ENCODE measurements at regions of chr22 and their contacts with region 1.

Region 1: GRCh38 chr22:30920407-30920806 is 48.2 kb downstream of the MORC2 start:
- DNase-seq: peak; percentile 92
- H3K4me3 ChIP-seq: peak overlapping the region in 2 of 8 donors; percentile 48 to 60
- H3K27ac ChIP-seq: no peak overlapping the region
- H3K4me1 ChIP-seq: peaks cover 3 to 29% (median 21%) of the 10 kb centered on the region in 6 donors
- H3K27me3 ChIP-seq: no peaks in the 10 kb centered on the region
- CTCF ChIP-seq: peak; percentile 74 to 96 (median 91)
- POLR2A ChIP-seq: no peak

Region 2: GRCh38 chr22:30634471-30635233 is 285.8 kb before region 1 on chr22:
- intact Hi-C with region 1: loop called (anchors 2 kb)
- DNase-seq: peak; percentile 97
- H3K4me3 ChIP-seq: peak overlapping the region; percentile 27 to 70 (median 64)
- H3K27ac ChIP-seq: peak overlapping the region; percentile 86 to 95 (median 90)
- H3K4me1 ChIP-seq: peaks cover 21 to 42% (median 33%) of the 10 kb centered on the region in 6 donors
- H3K27me3 ChIP-seq: no peaks in the 10 kb centered on the region
- CTCF ChIP-seq: peak; percentile 81 to 98 (median 96)
- POLR2A ChIP-seq: no peak

Region 3: DNA sequence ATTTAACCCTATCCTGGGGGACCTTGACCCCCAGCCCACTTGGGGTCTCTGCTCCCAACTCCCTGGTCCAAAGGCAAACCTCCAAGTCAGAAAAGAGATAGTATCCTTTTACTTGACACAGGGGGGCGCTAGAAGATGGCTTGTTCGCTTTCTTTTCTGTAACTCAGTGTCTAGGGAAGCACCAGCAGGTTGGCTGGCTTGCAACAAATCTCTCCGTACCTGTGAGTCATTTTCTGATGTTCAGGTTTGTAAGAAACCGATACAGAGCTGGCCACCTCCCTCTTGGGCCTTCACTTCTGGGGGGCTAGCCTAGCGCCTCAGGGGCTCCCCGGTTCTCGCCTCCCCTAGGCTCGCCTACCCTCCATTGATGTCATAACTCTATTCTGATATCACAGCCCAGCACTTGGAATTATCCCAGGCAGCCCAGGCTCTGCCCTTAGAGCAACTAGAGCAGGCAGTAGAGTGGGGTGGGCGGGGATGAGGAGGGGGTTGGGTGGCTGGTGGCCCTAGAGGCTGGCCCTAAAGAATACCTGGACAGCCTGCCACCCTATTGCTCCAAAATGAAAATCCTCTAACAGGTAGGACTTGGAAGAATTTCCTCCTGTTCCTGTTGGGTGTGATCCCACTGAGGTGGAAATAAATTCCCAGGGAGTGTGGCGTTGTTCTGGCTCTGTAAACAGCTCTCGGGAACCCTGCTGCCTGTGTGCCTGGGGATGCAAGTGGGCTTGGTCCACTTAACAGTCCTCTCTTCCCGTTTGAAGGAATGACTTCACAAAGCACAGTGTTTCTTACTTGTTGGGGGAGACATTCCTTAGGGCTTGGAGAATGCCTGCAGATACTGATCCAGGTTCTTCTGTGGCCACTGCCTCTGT is 156.4 kb before region 1 on chr22:
- intact Hi-C with region 1: loop called (anchors 10 kb)
- DNase-seq: no peak
- H3K4me3 ChIP-seq: no peak overlapping the region
- H3K27ac ChIP-seq: no peak overlapping the region
- H3K4me1 ChIP-seq: peaks cover 0 to 7% (median 0%) of the 10 kb centered on the region in 6 donors
- H3K27me3 ChIP-seq: no peaks in the 10 kb centered on the region
- CTCF ChIP-seq: peak in 7 of 11 experiments; percentile 13 to 56 (median 45)
- POLR2A ChIP-seq: no peak

Region 4: DNA sequence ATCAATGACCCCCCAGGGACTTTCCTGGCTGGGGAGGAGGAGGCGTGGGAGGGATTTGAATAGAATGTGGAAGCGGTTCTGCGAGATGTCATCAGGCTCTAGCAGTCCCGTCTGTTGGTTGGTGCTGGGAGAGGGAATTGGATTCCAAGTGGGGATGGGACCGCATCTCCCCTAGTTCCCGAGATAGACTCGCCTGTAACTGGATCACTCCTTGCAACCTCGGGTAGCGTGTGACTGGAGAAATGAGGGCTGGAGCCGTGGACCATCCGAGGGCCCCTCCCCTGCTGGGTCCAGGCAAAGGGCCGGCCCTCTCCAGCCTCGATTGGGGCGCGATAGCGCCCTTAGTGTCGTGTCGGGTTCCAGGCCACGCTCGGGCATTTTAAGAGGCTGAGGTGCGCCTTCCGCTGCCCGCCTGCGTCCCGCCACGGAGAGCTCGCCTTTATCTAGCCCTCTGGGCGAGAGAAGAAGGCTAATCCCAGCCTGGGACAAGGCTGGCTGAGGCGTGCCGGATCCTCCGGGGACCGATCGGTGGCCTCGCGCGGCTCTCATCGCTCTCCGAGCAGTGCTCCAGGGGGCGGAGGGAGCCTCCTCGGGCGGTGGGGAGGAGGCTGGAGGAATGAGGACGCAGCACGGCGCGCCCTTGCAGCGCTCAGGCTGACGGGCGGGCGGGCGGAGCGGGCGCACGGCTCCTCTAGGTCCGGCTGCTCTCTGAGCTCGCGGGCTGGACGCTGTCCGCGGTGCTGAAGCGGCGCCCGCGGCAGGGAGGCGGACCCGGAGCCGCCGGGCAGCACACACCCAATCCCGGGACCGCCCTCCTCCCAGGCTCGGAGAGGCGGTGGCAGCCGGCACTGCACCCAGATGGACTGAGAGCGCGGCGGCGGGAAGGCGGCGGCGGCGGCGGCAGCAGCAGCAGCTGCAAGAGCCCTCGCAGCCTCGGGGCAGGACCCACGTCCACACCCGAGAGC is 117.9 kb before region 1 on chr22:
- intact Hi-C with region 1: no loop called
- DNase-seq: peak; percentile 85
- H3K4me3 ChIP-seq: peak overlapping the region in 3 of 8 donors; percentile 10 to 48 (median 10)
- H3K27ac ChIP-seq: no peak overlapping the region
- H3K4me1 ChIP-seq: peaks cover 4 to 15% (median 11%) of the 10 kb centered on the region in 6 donors
- H3K27me3 ChIP-seq: peaks cover 0 to 53% (median 21%) of the 10 kb centered on the region in 7 donors
- CTCF ChIP-seq: peak in 10 of 11 experiments; percentile 28 to 69 (median 48)
- POLR2A ChIP-seq: no peak

Region 5: DNA sequence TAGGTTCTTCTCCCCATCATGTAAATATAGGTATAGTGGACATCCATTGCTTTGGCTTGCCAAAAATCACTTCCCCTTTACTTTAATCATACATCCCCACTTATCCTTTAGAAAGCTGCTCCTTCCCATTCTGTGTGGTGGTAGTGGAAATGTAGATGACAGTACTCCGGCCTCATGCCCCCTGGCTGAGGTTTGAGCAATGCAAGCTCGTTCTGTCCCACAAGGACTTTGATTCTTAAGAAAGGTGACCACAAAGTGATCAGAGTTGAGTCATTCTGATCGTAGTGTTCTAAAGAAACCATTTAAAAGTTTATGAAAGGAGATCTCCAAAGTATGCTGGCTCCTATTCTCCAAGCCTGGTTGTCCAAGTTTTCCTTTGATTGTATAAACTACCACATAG is 59.5 kb after region 1 on chr22:
- intact Hi-C with region 1: no loop called
- DNase-seq: no peak
- H3K4me3 ChIP-seq: no peak overlapping the region
- H3K27ac ChIP-seq: no peak overlapping the region
- H3K4me1 ChIP-seq: peaks cover 0 to 5% (median 0%) of the 10 kb centered on the region in 6 donors
- H3K27me3 ChIP-seq: no peaks in the 10 kb centered on the region
- CTCF ChIP-seq: no peak
- POLR2A ChIP-seq: no peak

Region 6: DNA sequence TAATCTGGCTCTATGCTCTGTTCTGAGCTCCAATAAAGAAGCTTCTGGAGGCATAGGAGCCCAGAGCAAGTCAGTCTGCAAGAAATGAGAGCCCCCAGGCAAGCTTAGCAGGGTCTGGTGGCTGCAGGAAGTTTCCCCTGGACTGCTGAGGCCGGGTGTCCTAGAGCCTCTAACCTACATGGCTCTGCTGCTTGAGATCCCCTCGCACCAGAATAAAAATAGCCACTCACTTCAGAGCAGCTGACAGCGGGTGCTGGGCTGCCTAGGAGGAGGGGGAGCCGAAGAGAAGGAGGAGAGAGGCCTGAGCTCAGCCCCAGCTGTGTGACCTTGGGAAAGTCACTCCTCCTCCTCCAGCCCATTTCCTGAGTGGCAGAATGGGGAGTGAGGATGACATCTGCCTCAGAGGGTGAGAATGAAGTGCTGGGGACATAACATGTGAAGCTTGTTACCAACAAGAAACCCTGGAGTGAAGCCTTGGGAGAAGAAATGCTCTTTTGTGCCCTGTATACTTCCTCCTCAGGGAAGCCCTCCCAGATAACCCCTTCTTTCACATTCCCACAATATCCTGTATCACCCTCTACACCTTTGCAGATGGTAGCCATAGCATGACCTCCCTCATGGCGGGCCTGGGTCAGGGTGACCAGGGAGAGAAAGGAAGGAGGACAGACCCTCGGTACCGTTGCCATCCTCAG is 198.8 kb after region 1 on chr22:
- intact Hi-C with region 1: no loop called
- DNase-seq: no peak
- H3K4me3 ChIP-seq: no peak overlapping the region
- H3K27ac ChIP-seq: no peak overlapping the region
- H3K4me1 ChIP-seq: peaks cover 0 to 15% (median 0%) of the 10 kb centered on the region in 6 donors
- H3K27me3 ChIP-seq: no peaks in the 10 kb centered on the region
- CTCF ChIP-seq: no peak
- POLR2A ChIP-seq: no peak

Region 7: GRCh38 chr22:31343235-31344191 is 423.1 kb after region 1 on chr22:
- intact Hi-C with region 1: no loop called
- DNase-seq: peak; percentile 76
- H3K4me3 ChIP-seq: peak overlapping the region in 7 of 8 donors; percentile 63 to 84 (median 81)
- H3K27ac ChIP-seq: peak overlapping the region in 6 of 8 donors; percentile 13 to 96 (median 86)
- H3K4me1 ChIP-seq: peaks cover 40 to 92% (median 78%) of the 10 kb centered on the region in 6 donors
- H3K27me3 ChIP-seq: no peaks in the 10 kb centered on the region
- CTCF ChIP-seq: no peak
- POLR2A ChIP-seq: no peak